ENCODE measurements at regions of chr3 and their contacts with region 1.

Region 1: DNA sequence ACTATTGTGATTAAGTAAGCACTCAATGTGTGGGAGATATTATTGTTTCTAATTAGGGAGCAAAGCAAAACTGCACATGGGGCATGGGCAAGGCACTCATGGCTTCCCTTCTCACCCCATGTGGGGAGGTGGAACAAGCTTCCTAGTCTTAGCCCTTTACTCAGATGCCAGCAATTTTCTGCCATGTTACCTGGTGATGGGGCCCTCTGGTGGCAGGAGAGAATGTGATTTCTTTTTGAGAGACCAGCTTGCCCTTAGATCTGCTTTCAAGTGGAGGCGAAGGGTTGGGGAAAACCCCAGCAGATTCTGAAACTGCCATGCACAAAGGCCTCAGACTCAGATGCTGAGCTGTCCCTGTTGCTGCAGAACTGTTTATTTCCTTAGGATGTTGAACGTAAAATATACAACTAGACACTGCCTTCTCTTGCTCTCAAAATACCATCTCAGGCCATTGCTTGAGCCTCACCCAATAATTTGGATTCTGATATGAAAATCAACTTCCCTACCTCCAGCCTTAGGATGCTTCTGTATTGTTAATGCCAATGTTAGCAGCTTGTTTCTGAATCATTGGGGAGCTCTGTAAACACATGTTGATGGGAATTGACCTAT is 130.2 kb upstream of the TPRG1 start:
- DNase-seq: peak; percentile 44 to 86 (median 66)
- ATAC-seq: peak; percentile 98 to 100 (median 100)
- H3K4me3 ChIP-seq: no peak overlapping the region
- H3K4me3 Mint-ChIP-seq: no peak overlapping the region
- H3K27ac ChIP-seq: peak overlapping the region; percentile 55
- H3K27ac Mint-ChIP-seq: peak overlapping the region; percentile 79 to 83
- H3K4me1 ChIP-seq: peaks cover 2 to 5% of the 10 kb centered on the region in 2 experiments
- H3K4me1 Mint-ChIP-seq: peaks cover 9 to 14% (median 13%) of the 10 kb centered on the region in 3 donors
- H3K27me3 ChIP-seq: no peaks in the 10 kb centered on the region
- H3K27me3 Mint-ChIP-seq: no peaks in the 10 kb centered on the region

Region 2: DNA sequence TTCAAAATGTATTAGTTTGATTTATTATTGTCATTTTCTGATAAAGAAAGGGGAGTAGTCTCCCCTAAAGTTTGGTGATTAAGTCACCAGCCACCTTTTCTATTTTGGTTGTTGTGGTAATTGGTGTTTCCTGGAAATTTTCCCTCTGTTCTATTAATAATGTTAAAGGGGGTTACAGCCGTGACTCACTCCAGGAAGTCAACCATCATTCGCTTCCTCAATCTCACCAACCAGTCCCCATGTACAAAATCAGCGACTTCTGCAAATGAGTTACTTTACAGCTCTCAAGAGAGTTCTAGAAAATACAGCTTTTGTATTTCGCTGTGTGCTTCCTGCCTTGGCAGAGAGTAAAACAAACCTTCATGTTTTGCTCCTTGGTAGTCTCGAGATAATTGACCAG is 602.5 kb before region 1 on chr3:
- CTCF ChIA-PET with region 1: no interaction called
- POLR2A ChIA-PET with region 1: no interaction called
- DNase-seq: peak in 13 of 35 experiments; percentile 1 to 59 (median 9)
- ATAC-seq: peak; percentile 86 to 94 (median 90)
- H3K4me3 ChIP-seq: no peak overlapping the region
- H3K4me3 Mint-ChIP-seq: peak overlapping the region; percentile 7 to 43 (median 22)
- H3K27ac ChIP-seq: peak overlapping the region; percentile 73
- H3K27ac Mint-ChIP-seq: peak overlapping the region; percentile 40 to 81
- H3K4me1 ChIP-seq: peaks cover 5 to 8% of the 10 kb centered on the region in 2 experiments
- H3K4me1 Mint-ChIP-seq: peaks cover 33 to 64% (median 33%) of the 10 kb centered on the region in 3 donors
- H3K27me3 ChIP-seq: no peaks in the 10 kb centered on the region
- H3K27me3 Mint-ChIP-seq: no peaks in the 10 kb centered on the region

Region 3: GRCh38 chr3:189013224-189013888 is 28.2 kb before region 1 on chr3:
- CTCF ChIA-PET with region 1: no interaction called
- POLR2A ChIA-PET with region 1: no interaction called
- DNase-seq: no peak
- ATAC-seq: no peak
- H3K4me3 ChIP-seq: no peak overlapping the region
- H3K4me3 Mint-ChIP-seq: no peak overlapping the region
- H3K27ac ChIP-seq: no peak overlapping the region
- H3K27ac Mint-ChIP-seq: peak overlapping the region in 1 of 2 donors; percentile 5
- H3K4me1 ChIP-seq: no peaks in the 10 kb centered on the region
- H3K4me1 Mint-ChIP-seq: peaks cover 12 to 15% (median 13%) of the 10 kb centered on the region in 3 donors
- H3K27me3 ChIP-seq: no peaks in the 10 kb centered on the region
- H3K27me3 Mint-ChIP-seq: no peaks in the 10 kb centered on the region

Region 4: GRCh38 chr3:189142527-189142926 is 100.9 kb after region 1 on chr3:
- CTCF ChIA-PET with region 1: interaction called, 3 to 19 read pairs
- POLR2A ChIA-PET with region 1: interaction called in 1 of 2 experiments, 10 read pairs
- DNase-seq: peak in 14 of 35 experiments; percentile 4 to 64 (median 14)
- ATAC-seq: peak in 3 of 4 experiments; percentile 51 to 62 (median 61)
- H3K4me3 ChIP-seq: no peak overlapping the region
- H3K4me3 Mint-ChIP-seq: no peak overlapping the region
- H3K27ac ChIP-seq: peak overlapping the region; percentile 5
- H3K27ac Mint-ChIP-seq: peak overlapping the region; percentile 57 to 75
- H3K4me1 ChIP-seq: peaks cover 3 to 14% of the 10 kb centered on the region in 2 experiments
- H3K4me1 Mint-ChIP-seq: peaks cover 12 to 33% (median 32%) of the 10 kb centered on the region in 3 donors
- H3K27me3 ChIP-seq: no peaks in the 10 kb centered on the region
- H3K27me3 Mint-ChIP-seq: no peaks in the 10 kb centered on the region

Region 5: GRCh38 chr3:189148081-189148507 is 106.5 kb after region 1 on chr3:
- CTCF ChIA-PET with region 1: interaction called, 3 to 19 read pairs
- POLR2A ChIA-PET with region 1: no interaction called
- DNase-seq: peak; percentile 19 to 84 (median 60)
- ATAC-seq: peak; percentile 55 to 75 (median 62)
- H3K4me3 ChIP-seq: no peak overlapping the region
- H3K4me3 Mint-ChIP-seq: no peak overlapping the region
- H3K27ac ChIP-seq: no peak overlapping the region
- H3K27ac Mint-ChIP-seq: peak overlapping the region in 1 of 2 donors; percentile 21
- H3K4me1 ChIP-seq: peaks cover 3 to 6% of the 10 kb centered on the region in 2 experiments
- H3K4me1 Mint-ChIP-seq: peaks cover 12 to 25% (median 22%) of the 10 kb centered on the region in 3 donors
- H3K27me3 ChIP-seq: no peaks in the 10 kb centered on the region
- H3K27me3 Mint-ChIP-seq: no peaks in the 10 kb centered on the region

Region 6: GRCh38 chr3:189981668-189982067 is 940.1 kb after region 1 on chr3:
- CTCF ChIA-PET with region 1: no interaction called
- POLR2A ChIA-PET with region 1: no interaction called
- DNase-seq: no peak
- ATAC-seq: no peak
- H3K4me3 ChIP-seq: no peak overlapping the region
- H3K4me3 Mint-ChIP-seq: no peak overlapping the region
- H3K27ac ChIP-seq: no peak overlapping the region
- H3K27ac Mint-ChIP-seq: no peak overlapping the region
- H3K4me1 ChIP-seq: no peaks in the 10 kb centered on the region
- H3K4me1 Mint-ChIP-seq: no peaks in the 10 kb centered on the region
- H3K27me3 ChIP-seq: peaks cover 0 to 4% of the 10 kb centered on the region in 2 experiments
- H3K27me3 Mint-ChIP-seq: peaks cover 26 to 31% of the 10 kb centered on the region in 2 donors

Measured in T-cell (primary cell).